CD4-positive, alpha-beta memory T cell (primary cell): ENCODE measurements at regions of chr11 and their contacts with region 1.

Region 1: DNA sequence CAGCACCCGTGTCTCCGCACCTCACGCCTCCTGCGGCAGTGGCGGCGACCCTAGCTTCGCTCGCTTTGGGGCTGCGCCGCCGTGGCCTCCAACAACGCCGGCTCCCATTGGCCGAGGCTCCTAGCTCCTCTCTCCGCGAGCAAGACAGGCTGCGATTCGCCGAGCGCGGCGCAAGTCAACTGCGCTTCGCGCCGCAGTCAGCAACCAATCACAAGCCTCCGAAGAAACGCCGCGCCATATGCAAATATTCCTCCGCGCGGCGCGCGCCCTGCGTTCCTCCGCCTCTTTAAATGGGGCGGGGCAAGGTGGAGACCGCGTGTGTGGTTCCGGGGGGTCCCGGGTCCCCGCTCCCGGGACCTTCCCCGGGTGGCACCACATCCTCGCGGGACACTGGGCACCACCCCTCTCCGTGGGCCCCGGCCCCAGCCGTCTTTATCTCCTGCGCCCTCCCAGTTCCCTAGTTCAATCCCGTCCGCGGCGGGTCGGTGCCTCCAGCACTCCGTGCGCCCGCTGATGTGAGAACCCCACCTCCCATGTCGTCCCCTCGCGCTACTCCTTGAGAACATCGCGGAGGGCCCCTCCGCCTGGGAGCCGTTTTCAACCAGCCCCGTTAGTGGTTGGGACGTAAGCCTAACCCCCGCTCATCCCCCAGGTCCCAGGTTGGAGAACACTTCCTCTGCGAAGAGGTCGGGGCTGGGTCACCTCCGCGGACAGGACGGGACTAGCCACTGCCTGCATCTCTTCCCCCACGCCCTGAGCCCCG is at the start of gene NAP1L4:
- DNase-seq: peak; percentile 94 to 97 (median 95)
- H3K4me3 ChIP-seq: peak within 1 kb of the TSS; percentile 76 to 90
- H3K4me3 Mint-ChIP-seq: peak within 1 kb of the TSS; percentile 96 to 100 (median 98)
- H3K27ac ChIP-seq: peak within 1 kb of the TSS; percentile 84
- H3K27ac Mint-ChIP-seq: peak within 1 kb of the TSS; percentile 97 to 99 (median 99)
- H3K4me1 ChIP-seq: peaks cover 31% of the 10 kb centered on the region
- H3K4me1 Mint-ChIP-seq: peaks cover 12 to 57% (median 25%) of the 10 kb centered on the region in 4 donors
- H3K27me3 ChIP-seq: no peaks in the 10 kb centered on the region
- H3K27me3 Mint-ChIP-seq: peaks cover 0 to 2% of the 10 kb centered on the region in 2 donors
- total RNA-seq, gene NAP1L4: 299 to 303 TPM

Region 2: DNA sequence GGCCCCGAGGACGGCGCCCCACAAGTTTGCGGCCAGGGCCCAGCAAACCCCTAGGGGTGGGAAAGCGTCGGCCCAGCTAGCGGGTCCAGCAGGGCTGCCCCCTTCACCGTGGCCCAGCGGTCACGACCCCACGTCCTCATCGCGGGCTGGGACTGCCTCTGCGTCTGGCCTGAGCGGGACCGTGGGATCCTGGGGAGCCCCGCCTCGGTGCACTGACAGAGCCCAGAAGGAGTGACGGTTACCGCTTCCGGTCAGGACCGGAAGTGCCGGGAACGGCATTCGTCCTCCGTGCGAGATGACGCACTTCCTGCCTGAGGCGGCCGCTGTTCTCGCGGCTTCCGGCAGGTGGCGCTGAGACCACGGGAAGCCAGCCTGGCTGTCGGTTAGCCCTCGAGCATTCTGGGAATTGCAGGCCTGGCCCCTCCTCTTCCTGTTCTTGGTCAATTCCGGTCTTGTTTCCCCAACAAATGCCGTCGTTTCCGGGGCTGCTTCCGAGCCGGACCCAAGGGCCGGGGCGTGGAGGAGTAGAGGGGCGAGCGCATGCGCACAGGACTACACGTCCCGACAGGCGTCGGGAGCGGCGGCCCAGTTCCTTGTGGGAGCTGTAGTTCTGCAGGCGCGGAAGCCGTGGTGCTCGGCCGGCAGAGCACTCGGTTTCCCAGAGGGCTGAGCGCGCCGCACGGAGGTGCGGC is 592.2 kb before region 1 on chr11 and contains the start of gene TSSC4:
- CTCF ChIA-PET with region 1: no interaction called
- POLR2A ChIA-PET with region 1: no interaction called
- intact Hi-C with region 1: loop called (anchors 1 kb)
- DNase-seq: peak; percentile 100
- H3K4me3 ChIP-seq: peak within 1 kb of the TSS; percentile 85 to 96
- H3K4me3 Mint-ChIP-seq: peak within 1 kb of the TSS; percentile 89 to 97 (median 94)
- H3K27ac ChIP-seq: peak within 1 kb of the TSS; percentile 98
- H3K27ac Mint-ChIP-seq: peak within 1 kb of the TSS; percentile 92 to 100 (median 96)
- H3K4me1 ChIP-seq: peaks cover 24% of the 10 kb centered on the region
- H3K4me1 Mint-ChIP-seq: peaks cover 6 to 31% (median 17%) of the 10 kb centered on the region in 4 donors
- H3K27me3 ChIP-seq: no peaks in the 10 kb centered on the region
- H3K27me3 Mint-ChIP-seq: peaks cover 0 to 3% of the 10 kb centered on the region in 2 donors
- total RNA-seq, gene TSSC4: 58.6 to 65.8 TPM

Region 3: GRCh38 chr11:2778630-2779498 is 213.6 kb before region 1 on chr11:
- CTCF ChIA-PET with region 1: no interaction called
- POLR2A ChIA-PET with region 1: no interaction called
- intact Hi-C with region 1: no loop called
- DNase-seq: no peak
- H3K4me3 ChIP-seq: no peak overlapping the region
- H3K4me3 Mint-ChIP-seq: peak overlapping the region in 2 of 8 donors; percentile 49 to 55
- H3K27ac ChIP-seq: no peak overlapping the region
- H3K27ac Mint-ChIP-seq: no peak overlapping the region
- H3K4me1 ChIP-seq: peaks cover 12% of the 10 kb centered on the region
- H3K4me1 Mint-ChIP-seq: peaks cover 6 to 15% (median 8%) of the 10 kb centered on the region in 4 donors
- H3K27me3 ChIP-seq: no peaks in the 10 kb centered on the region
- H3K27me3 Mint-ChIP-seq: no peaks in the 10 kb centered on the region

Region 4: DNA sequence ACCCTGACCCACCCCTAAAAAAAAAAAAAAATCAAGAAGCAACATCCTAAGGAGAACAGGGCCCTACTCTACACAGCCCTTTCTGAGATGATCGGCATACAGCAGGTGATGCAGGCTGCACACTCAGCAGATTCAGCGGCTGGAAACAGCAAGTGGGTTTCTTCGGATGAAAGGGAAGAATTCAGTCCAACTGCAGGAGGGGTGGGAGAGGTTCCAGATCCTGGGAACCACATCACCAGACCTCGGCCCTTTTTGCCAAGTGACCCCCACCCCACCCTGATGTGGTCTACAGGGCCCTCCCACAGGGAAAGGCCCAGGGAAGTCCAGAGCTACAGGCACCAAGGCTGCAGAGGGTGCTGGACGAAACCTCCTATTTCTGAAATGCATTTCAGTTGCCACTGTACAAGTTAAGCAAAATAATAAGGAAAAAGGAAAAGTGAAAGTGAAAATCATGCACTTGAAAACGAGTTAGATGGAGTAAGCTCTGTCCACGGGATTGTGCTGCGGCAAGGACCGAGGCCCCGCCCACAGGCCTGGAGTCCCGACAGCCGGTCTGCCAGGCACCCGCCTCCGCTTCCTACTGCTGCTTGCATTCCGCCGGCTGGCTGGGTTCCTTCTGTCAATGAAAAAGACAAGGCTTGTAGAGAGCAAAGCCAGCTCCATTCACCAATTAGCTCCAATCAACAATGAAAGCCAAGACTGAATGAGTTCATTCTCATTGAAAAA is 47.2 kb before region 1 on chr11:
- CTCF ChIA-PET with region 1: no interaction called
- POLR2A ChIA-PET with region 1: interaction called, 6 read pairs
- intact Hi-C with region 1: loop called (anchors 5 kb)
- DNase-seq: peak in 3 of 5 donors; percentile 36 to 61 (median 45)
- H3K4me3 ChIP-seq: no peak overlapping the region
- H3K4me3 Mint-ChIP-seq: peak overlapping the region in 5 of 8 donors; percentile 21 to 76 (median 59)
- H3K27ac ChIP-seq: no peak overlapping the region
- H3K27ac Mint-ChIP-seq: peak overlapping the region; percentile 42 to 91 (median 80)
- H3K4me1 ChIP-seq: peaks cover 43% of the 10 kb centered on the region
- H3K4me1 Mint-ChIP-seq: peaks cover 36 to 68% (median 52%) of the 10 kb centered on the region in 4 donors
- H3K27me3 ChIP-seq: no peaks in the 10 kb centered on the region
- H3K27me3 Mint-ChIP-seq: no peaks in the 10 kb centered on the region

Region 5: GRCh38 chr11:2982214-2982613 is 10.2 kb before region 1 on chr11:
- CTCF ChIA-PET with region 1: interaction called, 7 read pairs
- POLR2A ChIA-PET with region 1: interaction called, 19 read pairs
- intact Hi-C with region 1: no loop called
- DNase-seq: no peak
- H3K4me3 ChIP-seq: no peak overlapping the region
- H3K4me3 Mint-ChIP-seq: peak overlapping the region in 6 of 8 donors; percentile 7 to 76 (median 50)
- H3K27ac ChIP-seq: peak overlapping the region; percentile 13
- H3K27ac Mint-ChIP-seq: peak overlapping the region; percentile 32 to 86 (median 67)
- H3K4me1 ChIP-seq: peaks cover 75% of the 10 kb centered on the region
- H3K4me1 Mint-ChIP-seq: peaks cover 41 to 77% (median 53%) of the 10 kb centered on the region in 4 donors
- H3K27me3 ChIP-seq: no peaks in the 10 kb centered on the region
- H3K27me3 Mint-ChIP-seq: no peaks in the 10 kb centered on the region

Region 6: DNA sequence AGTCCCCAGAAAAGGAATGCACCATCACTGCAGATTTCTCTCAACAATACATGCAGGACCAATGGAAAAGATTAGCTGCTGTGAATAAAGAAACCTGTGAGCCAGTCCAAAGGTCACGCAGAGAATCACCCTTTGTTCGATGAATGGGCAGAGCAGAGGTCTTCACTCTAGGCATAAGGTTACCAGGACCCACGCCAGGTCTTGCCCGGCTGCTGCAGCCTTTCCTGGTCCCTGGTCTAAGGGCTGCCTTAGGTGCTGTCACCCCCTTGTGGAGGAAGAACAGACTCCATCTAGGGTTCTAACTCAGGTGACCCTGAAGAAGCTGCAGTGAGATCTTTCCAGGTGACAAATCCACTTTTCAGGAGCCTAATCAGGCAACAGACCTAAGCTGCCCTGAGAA is 28.7 kb after region 1 on chr11:
- CTCF ChIA-PET with region 1: interaction called, 13 read pairs
- POLR2A ChIA-PET with region 1: interaction called, 178 read pairs
- intact Hi-C with region 1: no loop called
- DNase-seq: peak; percentile 20 to 56 (median 42)
- H3K4me3 ChIP-seq: no peak overlapping the region
- H3K4me3 Mint-ChIP-seq: no peak overlapping the region
- H3K27ac ChIP-seq: no peak overlapping the region
- H3K27ac Mint-ChIP-seq: peak overlapping the region in 2 of 7 donors; percentile 41 to 42
- H3K4me1 ChIP-seq: peaks cover 25% of the 10 kb centered on the region
- H3K4me1 Mint-ChIP-seq: peaks cover 23 to 48% (median 27%) of the 10 kb centered on the region in 4 donors
- H3K27me3 ChIP-seq: no peaks in the 10 kb centered on the region
- H3K27me3 Mint-ChIP-seq: no peaks in the 10 kb centered on the region

Region 7: DNA sequence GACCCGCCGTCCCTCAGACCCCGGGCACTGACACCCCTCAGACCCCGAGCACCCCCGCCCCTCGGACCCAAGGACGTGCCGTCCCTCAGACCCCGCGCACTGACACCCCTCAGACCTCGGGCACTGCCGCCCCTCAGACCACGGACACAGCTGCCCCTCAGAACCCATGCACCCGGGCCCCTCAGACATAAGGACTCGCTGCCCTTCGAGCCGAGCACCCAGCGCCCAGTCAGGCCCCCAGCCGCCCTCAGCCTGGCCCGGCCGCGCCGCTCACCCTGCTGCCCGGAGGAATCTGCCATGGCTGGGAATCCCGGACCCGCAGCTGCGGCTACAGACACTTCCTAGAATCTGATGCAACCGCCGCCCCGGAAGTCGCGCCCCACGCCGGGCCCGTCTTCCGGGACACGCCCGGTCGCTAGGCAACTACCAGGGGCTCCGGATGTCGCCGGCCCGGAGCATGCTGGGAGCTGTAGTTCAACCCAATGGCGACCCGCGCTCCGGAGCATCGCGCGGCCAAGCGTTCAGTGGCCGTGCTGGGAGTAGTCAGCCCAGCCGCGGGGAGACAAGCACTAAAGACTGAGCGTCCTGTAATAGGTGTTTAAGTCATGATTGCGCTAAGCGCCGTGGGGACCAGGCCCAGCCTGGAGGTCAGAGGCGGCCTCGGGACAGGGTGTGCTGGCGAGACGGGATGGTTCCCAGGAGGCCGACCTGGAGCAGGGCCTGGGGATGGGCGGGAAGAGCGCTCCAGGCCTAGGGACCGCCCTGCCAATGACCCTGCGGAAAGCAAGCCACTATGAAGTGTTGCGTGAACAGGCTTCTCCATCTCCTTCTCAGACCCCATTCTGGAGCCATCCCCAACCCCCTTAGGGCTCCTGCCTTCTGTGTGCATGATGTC is 64.9 kb after region 1 on chr11 and contains the start of gene CARS1:
- CTCF ChIA-PET with region 1: no interaction called
- POLR2A ChIA-PET with region 1: interaction called, 9 read pairs
- intact Hi-C with region 1: loop called (anchors 1 kb)
- DNase-seq: peak; percentile 89 to 93 (median 90)
- H3K4me3 ChIP-seq: peak within 1 kb of the TSS; percentile 58 to 85
- H3K4me3 Mint-ChIP-seq: peak within 1 kb of the TSS; percentile 86 to 93 (median 88)
- H3K27ac ChIP-seq: peak within 1 kb of the TSS; percentile 96
- H3K27ac Mint-ChIP-seq: peak within 1 kb of the TSS; percentile 81 to 93 (median 90)
- H3K4me1 ChIP-seq: peaks cover 32% of the 10 kb centered on the region
- H3K4me1 Mint-ChIP-seq: peaks cover 20 to 45% (median 35%) of the 10 kb centered on the region in 4 donors
- H3K27me3 ChIP-seq: no peaks in the 10 kb centered on the region
- H3K27me3 Mint-ChIP-seq: peaks cover 0 to 3% of the 10 kb centered on the region in 2 donors
- total RNA-seq, gene CARS1: 71.0 to 80.3 TPM